ENCODE measurements at regions of chr11 and their contacts with region 1.

Region 1: GRCh38 chr11:3959015-3959919 is 103.8 kb downstream of the STIM1 start:
- DNase-seq: no peak
- ATAC-seq: no peak
- H3K4me3 ChIP-seq: no peak overlapping the region
- H3K27ac ChIP-seq: no peak overlapping the region
- H3K4me1 ChIP-seq: peaks cover 2% of the 10 kb centered on the region
- H3K27me3 ChIP-seq: no peaks in the 10 kb centered on the region

Region 2: GRCh38 chr11:3091791-3092602 is 867.3 kb before region 1 on chr11:
- intact Hi-C with region 1: no loop called
- DNase-seq: peak in 2 of 3 donors; percentile 82 to 85
- ATAC-seq: peak; percentile 44 to 61
- H3K4me3 ChIP-seq: no peak overlapping the region
- H3K27ac ChIP-seq: no peak overlapping the region
- H3K4me1 ChIP-seq: no peaks in the 10 kb centered on the region
- H3K27me3 ChIP-seq: no peaks in the 10 kb centered on the region

Region 3: GRCh38 chr11:4044976-4045646 is 85.8 kb after region 1 on chr11:
- intact Hi-C with region 1: loop called in 1 of 4 experiments (anchors 10 kb)
- DNase-seq: peak in 2 of 3 donors; percentile 44 to 66
- ATAC-seq: peak; percentile 72 to 78
- H3K4me3 ChIP-seq: no peak overlapping the region
- H3K27ac ChIP-seq: no peak overlapping the region
- H3K4me1 ChIP-seq: peaks cover 7% of the 10 kb centered on the region
- H3K27me3 ChIP-seq: no peaks in the 10 kb centered on the region

Region 4: DNA sequence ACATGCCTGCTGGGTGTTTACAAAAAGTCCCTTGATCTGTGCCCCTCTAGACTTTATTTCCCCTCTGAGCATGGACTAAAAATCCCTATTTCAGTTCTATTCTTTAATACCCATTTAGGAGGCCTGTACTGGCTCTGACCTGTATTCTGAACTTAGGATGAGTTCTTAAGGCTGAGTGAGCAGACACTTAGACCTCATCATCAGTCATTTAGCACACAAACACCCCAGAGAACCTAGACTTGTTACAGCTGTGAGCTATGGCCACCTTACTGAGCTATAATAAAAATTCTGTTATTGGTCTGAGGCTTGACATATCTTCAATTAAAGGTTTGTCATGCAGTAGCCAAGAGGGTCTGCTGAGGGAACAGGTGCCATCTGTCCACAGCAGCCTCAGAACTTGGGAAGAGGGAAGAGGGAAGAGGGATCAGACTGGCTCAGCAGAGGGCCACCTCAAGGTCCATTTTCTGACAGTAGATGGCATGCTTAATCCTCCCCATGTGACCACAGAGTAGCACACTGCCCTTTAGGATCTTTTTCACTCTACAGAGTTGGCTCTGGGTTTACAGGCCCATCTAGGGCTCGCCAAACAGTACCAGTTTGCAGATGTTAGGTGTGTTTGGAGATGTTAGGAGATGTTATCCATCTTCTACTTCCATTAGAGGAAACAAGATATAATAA is 105.2 kb after region 1 on chr11:
- intact Hi-C with region 1: no loop called
- DNase-seq: no peak
- ATAC-seq: peak in 1 of 2 donors; percentile 33
- H3K4me3 ChIP-seq: no peak overlapping the region
- H3K27ac ChIP-seq: no peak overlapping the region
- H3K4me1 ChIP-seq: peaks cover 6% of the 10 kb centered on the region
- H3K27me3 ChIP-seq: no peaks in the 10 kb centered on the region